CD4-positive, alpha-beta memory T cell (primary cell): ENCODE measurements at regions of chr5 and their contacts with region 1.

Region 1: DNA sequence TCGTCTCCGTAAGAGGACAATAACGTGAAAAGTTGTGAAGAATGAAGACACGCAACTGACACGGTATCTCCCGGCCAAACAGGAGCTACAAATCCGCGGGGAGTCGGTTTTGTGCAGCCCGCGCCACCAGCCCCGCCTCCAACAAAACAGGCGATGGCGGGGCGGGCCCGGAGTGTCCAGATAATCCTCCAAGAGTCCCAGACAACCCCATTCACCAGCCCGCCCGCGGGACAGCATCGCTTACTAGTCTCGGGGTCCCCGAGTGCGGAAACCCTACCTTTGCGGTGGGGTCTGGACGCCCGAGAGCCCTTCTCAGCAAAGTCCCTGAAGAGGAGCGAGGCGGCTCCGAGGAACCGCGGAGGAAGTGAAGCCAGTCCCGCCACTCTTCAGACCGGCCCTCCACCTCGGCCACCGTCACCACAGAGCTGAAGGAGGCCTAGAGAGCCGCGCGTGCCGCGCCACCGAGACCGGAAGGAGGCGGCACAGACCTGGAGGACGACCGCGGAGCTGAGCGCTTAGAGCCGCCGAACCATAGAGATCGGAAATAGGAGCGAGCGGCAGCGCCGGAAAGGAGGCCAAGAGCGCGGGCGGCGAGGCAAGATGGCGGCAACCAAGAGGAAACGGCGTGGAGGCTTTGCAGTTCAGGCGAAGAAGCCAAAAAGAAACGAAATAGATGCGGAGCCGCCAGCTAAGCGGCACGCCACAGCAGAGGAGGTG is at the starts of genes BRIX1 and RAD1:
- DNase-seq: peak; percentile 92 to 94 (median 94)
- H3K4me3 ChIP-seq: peak within 1 kb of the TSS; percentile 84 to 95
- H3K4me3 Mint-ChIP-seq: peak within 1 kb of the TSS in 4 of 8 donors; percentile 52 to 69 (median 66)
- H3K27ac ChIP-seq: peak within 1 kb of the TSS; percentile 75
- H3K27ac Mint-ChIP-seq: peak within 1 kb of the TSS in 2 of 7 donors; percentile 68 to 81
- H3K4me1 ChIP-seq: peaks cover 40% of the 10 kb centered on the region
- H3K4me1 Mint-ChIP-seq: peaks cover 19 to 37% (median 24%) of the 10 kb centered on the region in 4 donors
- H3K27me3 ChIP-seq: no peaks in the 10 kb centered on the region
- H3K27me3 Mint-ChIP-seq: no peaks in the 10 kb centered on the region
- total RNA-seq, gene BRIX1: 27.1 to 30.9 TPM
- total RNA-seq, gene RAD1: 22.7 to 26.3 TPM

Region 2: GRCh38 chr5:34007621-34008600 is 907.4 kb before region 1 on chr5 and contains the start of gene AMACR:
- CTCF ChIA-PET with region 1: no interaction called
- POLR2A ChIA-PET with region 1: interaction called, 3 read pairs
- intact Hi-C with region 1: loop called (anchors 2 kb)
- DNase-seq: peak; percentile 75 to 87 (median 86)
- H3K4me3 ChIP-seq: peak within 1 kb of the TSS; percentile 96 to 100
- H3K4me3 Mint-ChIP-seq: peak within 1 kb of the TSS; percentile 93 to 97 (median 96)
- H3K27ac ChIP-seq: peak within 1 kb of the TSS; percentile 76
- H3K27ac Mint-ChIP-seq: peak within 1 kb of the TSS; percentile 84 to 96 (median 94)
- H3K4me1 ChIP-seq: peaks cover 22% of the 10 kb centered on the region
- H3K4me1 Mint-ChIP-seq: peaks cover 11 to 27% (median 19%) of the 10 kb centered on the region in 4 donors
- H3K27me3 ChIP-seq: no peaks in the 10 kb centered on the region
- H3K27me3 Mint-ChIP-seq: no peaks in the 10 kb centered on the region
- total RNA-seq, gene AMACR: 5.2 to 7.3 TPM

Region 3: DNA sequence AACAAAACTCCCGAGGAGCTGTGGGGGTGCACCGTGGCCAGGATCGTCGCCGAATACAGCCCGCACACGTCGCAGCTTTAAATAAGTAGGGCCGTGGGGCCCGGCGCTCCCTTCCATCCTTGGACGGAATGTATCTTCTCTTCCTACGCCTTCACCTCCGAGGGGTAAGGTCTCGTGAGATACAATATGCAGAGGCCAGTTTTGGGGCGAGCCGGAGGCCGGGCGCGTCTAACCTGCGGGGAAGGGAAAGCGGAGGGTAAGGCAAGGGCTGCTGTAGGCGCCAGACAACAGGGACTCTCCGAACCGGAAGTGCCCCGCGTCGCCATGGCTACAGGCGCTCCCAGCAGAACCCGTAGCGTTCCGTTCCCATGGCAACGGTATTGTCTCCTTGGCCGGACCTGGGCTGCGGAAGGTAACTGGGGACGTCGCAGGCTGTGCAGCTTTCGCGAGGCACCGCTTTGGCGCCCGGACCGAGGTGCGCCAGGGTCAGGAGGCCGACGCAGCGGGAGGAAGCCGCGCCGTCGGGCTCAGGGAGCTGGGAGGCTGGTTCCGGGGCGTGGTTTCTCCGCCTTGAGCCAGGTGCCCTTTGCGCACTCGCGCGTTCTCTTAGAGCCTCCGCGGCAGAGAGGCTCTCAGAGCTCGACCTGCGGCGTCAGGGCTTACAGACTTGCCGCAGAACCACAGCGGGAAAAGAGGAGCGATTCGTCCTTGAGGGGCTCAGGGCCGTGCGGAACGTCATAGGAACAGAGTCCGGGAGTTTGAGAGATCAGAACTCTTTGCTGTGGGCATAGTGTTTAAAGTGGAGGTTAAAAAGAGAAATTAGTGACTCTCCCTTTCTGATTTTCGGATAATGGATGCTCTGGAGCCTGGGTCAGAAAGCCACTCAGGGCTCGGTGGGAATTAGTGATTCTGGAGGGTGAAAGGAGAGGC is 76.2 kb before region 1 on chr5 and contains the start of gene TTC23L:
- CTCF ChIA-PET with region 1: interaction called, 3 read pairs
- POLR2A ChIA-PET with region 1: interaction called, 27 read pairs
- intact Hi-C with region 1: loop called (anchors 1 kb)
- DNase-seq: peak; percentile 90 to 97 (median 91)
- H3K4me3 ChIP-seq: peak within 1 kb of the TSS; percentile 88 to 89
- H3K4me3 Mint-ChIP-seq: peak within 1 kb of the TSS; percentile 93 to 98 (median 95)
- H3K27ac ChIP-seq: peak within 1 kb of the TSS; percentile 70
- H3K27ac Mint-ChIP-seq: peak within 1 kb of the TSS; percentile 96 to 99 (median 98)
- H3K4me1 ChIP-seq: peaks cover 13% of the 10 kb centered on the region
- H3K4me1 Mint-ChIP-seq: peaks cover 4 to 16% (median 10%) of the 10 kb centered on the region in 4 donors
- H3K27me3 ChIP-seq: no peaks in the 10 kb centered on the region
- H3K27me3 Mint-ChIP-seq: peaks cover 0 to 2% of the 10 kb centered on the region in 2 donors
- total RNA-seq, gene TTC23L: 0.47 TPM in 1 of 2 experiments, not detected in the other